ENCODE measurements at regions of chr1 and their contacts with region 1.

Region 1: GRCh38 chr1:109802901-109803561 is 39.3 kb upstream of the EPS8L3 start:
- DNase-seq: no peak
- H3K4me3 Mint-ChIP-seq: peak overlapping the region; percentile 40
- H3K27ac Mint-ChIP-seq: peak overlapping the region; percentile 98
- H3K4me1 Mint-ChIP-seq: peaks cover 88% of the 10 kb centered on the region
- H3K27me3 Mint-ChIP-seq: no peaks in the 10 kb centered on the region

Region 2: GRCh38 chr1:109790735-109791494 is 12.1 kb before region 1 on chr1:
- CTCF ChIA-PET with region 1: interaction called, 44 read pairs
- DNase-seq: peak; percentile 88
- H3K4me3 Mint-ChIP-seq: no peak overlapping the region
- H3K27ac Mint-ChIP-seq: peak overlapping the region; percentile 91
- H3K4me1 Mint-ChIP-seq: peaks cover 77% of the 10 kb centered on the region
- H3K27me3 Mint-ChIP-seq: peaks cover 3% of the 10 kb centered on the region

Measured in activated naive CD4-positive, alpha-beta T cell treated with anti-CD3 and anti-CD28 coated beads, Interleukin-2, amount 10 ng/mL, durations not matched to agents 7 days and 5 days (primary cell).